Activated B cell treated with CpG ODN at 0.5 μM for 24 hours (primary cell): ENCODE measurements at regions of chr9 and their contacts with region 1.

Region 1: GRCh38 chr9:130243015-130243734 is 22.4 kb upstream of the HMCN2 start:
- DNase-seq: peak; percentile 72
- ATAC-seq: peak; percentile 40
- H3K4me3 Mint-ChIP-seq: peak overlapping the region; percentile 59
- H3K27ac Mint-ChIP-seq: peak overlapping the region; percentile 50
- H3K4me1 Mint-ChIP-seq: peaks cover 32% of the 10 kb centered on the region
- H3K27me3 Mint-ChIP-seq: peaks cover 3% of the 10 kb centered on the region
- CTCF ChIP-seq: peak; percentile 33

Region 2: DNA sequence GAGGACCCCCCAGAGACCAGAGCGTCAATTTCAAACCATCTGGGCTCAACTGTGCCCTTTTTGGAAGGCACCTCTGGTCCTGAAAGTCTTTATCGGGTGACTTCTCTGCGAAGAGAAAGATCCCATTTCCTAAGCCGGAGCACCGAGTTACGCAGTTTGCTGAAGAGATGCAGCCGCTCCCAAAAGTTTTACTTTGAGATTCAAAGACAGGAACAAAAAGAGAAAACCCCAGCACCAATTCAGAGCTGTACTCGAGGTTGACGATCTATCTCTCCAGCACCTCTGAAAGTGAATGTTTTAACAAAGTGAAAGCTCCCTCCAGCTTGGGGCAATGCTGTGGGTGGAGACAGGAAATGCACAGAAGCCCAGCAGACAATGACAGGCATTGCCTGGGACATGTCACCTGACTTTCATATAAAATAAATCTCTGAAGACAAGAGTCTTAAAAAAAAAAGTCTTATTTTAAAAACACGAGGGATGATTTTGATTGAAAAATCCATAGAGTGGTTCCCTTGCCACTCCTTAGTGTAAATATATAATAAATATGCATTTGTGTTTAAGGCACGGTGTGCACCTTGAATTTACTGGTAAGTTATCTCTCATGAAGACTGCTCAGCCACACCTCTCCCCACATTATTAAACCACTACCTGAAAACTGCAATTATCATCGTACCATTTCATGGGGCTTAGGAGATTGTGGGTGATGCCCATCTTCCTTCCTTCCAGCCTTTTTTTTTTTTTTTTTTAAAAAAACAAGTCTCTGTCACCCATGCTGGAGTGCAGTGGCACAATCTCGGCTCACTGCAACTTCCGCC is 280.1 kb before region 1 on chr9:
- CTCF ChIA-PET with region 1: no interaction called
- POLR2A ChIA-PET with region 1: no interaction called
- intact Hi-C with region 1: loop called (anchors 10 kb)
- DNase-seq: no peak
- ATAC-seq: peak; percentile 94
- H3K4me3 Mint-ChIP-seq: peak overlapping the region; percentile 81
- H3K27ac Mint-ChIP-seq: peak overlapping the region; percentile 90
- H3K4me1 Mint-ChIP-seq: peaks cover 67% of the 10 kb centered on the region
- H3K27me3 Mint-ChIP-seq: no peaks in the 10 kb centered on the region
- CTCF ChIP-seq: no peak

Region 3: DNA sequence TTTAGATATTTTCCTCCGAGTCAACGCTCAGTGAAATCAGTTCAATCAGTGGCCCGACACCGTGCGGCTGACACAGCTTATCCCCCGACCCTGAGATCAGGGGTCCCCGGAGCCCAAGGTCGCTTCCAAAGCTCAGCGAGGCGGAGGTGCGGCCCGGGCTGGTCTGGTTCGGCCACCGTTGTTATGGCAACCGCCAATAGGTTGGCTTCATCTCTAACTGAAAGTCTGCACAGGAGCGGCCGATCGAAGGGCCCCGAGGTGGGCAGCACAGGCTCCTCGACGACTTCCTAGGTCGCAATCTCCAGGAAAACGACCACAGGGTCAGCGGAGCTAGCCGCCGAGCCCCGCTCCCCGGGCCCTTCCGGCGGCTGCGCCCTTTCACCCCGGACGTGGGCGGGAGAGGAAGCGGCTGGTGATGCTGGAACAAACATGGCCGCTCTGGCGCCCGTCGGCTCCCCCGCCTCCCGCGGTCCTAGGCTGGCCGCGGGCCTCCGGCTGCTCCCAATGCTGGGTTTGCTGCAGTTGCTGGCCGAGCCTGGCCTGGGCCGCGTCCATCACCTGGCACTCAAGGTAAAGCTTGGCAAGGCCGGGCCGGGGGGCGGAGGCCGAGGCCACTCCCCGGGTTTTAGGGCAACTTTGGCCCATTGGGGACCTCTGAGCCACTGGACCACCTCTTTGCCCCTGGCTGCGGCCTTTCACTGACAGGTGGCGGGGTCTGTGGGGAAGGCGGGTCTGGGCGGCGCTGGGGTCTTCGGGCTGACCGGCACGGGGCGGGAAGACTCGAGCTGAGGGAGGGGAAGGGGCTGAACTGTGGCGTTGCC is 189.5 kb before region 1 on chr9 and contains the start of gene GPR107:
- CTCF ChIA-PET with region 1: no interaction called
- POLR2A ChIA-PET with region 1: no interaction called
- intact Hi-C with region 1: loop called (anchors 5 kb)
- DNase-seq: peak; percentile 73
- ATAC-seq: peak; percentile 96
- H3K4me3 Mint-ChIP-seq: peak within 1 kb of the TSS; percentile 91
- H3K27ac Mint-ChIP-seq: peak within 1 kb of the TSS; percentile 80
- H3K4me1 Mint-ChIP-seq: peaks cover 30% of the 10 kb centered on the region
- H3K27me3 Mint-ChIP-seq: no peaks in the 10 kb centered on the region
- CTCF ChIP-seq: no peak
- total RNA-seq, gene GPR107: 17.7 and 19.6 TPM in 2 replicates

Region 4: DNA sequence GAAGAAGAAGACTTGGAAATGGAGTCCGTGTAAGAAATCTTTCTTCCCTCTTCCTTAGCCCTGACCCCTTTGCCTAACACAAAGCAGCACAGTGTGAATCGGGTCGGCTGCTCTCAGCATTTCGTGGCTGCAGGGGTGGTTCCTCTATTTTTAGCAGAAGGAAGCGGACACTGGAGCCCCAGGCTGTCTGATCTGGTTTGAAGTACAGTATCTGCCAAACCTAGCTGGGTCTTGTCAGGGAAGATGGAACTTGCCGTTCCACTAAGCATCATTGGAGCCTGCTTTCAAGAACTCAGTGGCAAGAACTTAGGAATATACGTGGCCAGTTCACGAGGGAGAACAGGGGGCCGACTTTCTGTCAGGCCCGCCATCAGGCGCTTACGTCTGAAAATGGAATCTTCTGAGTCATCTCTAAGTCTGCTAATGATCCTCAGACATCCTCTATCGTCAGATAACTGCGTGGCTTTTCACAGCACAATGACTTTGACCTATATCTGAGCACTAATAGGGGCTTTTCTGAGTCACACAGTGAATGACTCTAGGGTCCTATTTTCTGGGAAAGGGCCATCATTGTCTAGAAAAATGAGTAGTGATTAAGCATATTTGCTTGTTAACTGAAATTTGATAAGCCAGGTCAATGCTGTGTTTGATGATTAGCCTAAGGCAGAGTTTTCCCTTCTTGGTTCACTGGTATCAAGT is 114.3 kb before region 1 on chr9:
- CTCF ChIA-PET with region 1: interaction called, 3 read pairs
- POLR2A ChIA-PET with region 1: interaction called, 23 read pairs
- intact Hi-C with region 1: loop called (anchors 1 kb)
- DNase-seq: peak; percentile 50
- ATAC-seq: peak; percentile 79
- H3K4me3 Mint-ChIP-seq: peak overlapping the region; percentile 83
- H3K27ac Mint-ChIP-seq: peak overlapping the region; percentile 99
- H3K4me1 Mint-ChIP-seq: peaks cover 39% of the 10 kb centered on the region
- H3K27me3 Mint-ChIP-seq: no peaks in the 10 kb centered on the region
- CTCF ChIP-seq: no peak

Region 5: DNA sequence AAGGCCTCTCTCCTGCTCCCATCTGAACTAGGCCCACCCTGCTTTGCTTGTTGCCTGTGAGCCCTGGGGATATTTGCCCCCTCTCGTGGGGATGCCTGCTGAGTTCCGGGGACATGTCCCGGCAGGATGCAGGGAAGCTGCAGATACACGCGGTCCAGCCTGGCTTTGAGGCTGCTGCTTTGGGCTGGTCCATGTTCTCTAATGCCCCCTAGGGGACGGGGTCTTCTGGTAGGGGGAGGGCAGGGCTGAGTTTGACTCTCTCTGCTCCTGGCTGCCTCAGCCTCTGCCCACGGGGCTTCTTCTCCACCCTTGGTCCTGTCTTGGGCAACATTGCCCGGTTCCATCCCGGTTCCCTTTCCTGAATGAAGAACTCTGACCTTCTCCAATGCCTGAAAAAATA is 116.6 kb after region 1 on chr9:
- CTCF ChIA-PET with region 1: no interaction called
- POLR2A ChIA-PET with region 1: interaction called, 3 read pairs
- intact Hi-C with region 1: loop called (anchors 5 kb)
- DNase-seq: no peak
- ATAC-seq: no peak
- H3K4me3 Mint-ChIP-seq: no peak overlapping the region
- H3K27ac Mint-ChIP-seq: no peak overlapping the region
- H3K4me1 Mint-ChIP-seq: peaks cover 20% of the 10 kb centered on the region
- H3K27me3 Mint-ChIP-seq: no peaks in the 10 kb centered on the region
- CTCF ChIP-seq: no peak